AG04450 (cell line): ENCODE measurements at regions of chr12 and their contacts with region 1.

Region 1: DNA sequence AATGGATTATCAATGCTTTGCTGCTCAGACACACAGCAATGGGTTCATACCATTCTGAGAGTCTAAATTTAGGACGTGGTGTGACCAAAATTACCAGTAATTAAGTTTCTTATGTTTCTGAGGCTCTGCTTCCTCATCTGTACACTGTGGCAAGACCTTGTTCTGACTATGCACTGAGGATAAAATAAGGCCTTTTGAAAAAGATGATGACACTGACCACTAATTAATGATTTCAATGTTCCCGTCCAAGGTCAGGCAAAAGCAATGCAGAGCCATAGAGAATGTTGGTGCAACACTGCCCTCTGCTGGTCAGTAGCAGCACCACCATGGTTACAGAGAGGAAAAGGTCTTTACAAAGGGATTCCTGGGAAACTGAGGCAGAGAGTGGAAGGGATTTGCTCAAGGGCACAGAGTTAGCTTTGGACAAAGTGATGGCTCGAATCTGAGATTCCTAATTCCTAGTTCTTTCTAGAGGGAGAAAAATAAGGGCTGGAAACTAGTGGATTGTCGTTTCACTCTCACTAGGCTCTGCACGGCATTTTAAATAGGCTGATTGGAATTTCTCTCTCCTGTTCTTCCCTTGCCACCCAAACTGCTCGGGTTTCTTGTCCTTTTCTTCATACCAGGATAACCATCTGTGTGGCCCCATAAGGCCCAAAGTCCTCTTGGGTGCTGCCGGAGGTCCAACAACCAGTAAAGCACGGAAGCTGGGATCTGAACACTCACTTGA is 22.3 kb upstream of the P2RX7 start:
- DNase-seq: peak; percentile 26
- H3K4me3 ChIP-seq: no peak overlapping the region
- H3K27ac ChIP-seq: no peak overlapping the region
- H3K27me3 ChIP-seq: no peaks in the 10 kb centered on the region
- CTCF ChIP-seq: peak; percentile 94

Region 2: DNA sequence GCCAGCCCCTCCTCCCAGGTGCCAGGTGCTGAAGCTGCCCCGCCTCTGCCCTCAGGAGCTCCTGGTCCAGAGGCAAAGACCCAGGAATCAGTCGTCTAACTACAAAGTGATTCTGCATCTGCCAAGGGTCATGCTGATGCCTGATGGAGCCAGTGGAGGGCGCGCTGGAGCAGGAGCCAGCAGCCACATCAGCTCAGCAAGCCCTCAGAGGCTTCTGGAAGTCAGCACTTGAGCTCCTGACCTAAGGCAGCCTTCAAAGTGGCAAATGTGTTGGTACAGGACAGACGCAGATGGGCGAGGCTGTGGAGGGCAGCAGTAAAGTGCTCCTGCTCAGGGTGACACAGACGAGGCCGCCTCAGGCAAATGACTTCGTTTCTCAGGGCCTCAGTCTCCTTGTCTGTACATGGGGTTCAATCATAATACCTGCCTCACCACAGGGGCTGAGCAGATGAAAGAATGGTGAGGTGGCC is 105.0 kb before region 1 on chr12:
- CTCF ChIA-PET with region 1: interaction called, 10 read pairs
- POLR2A ChIA-PET with region 1: no interaction called
- DNase-seq: no peak
- H3K4me3 ChIP-seq: no peak overlapping the region
- H3K27ac ChIP-seq: no peak overlapping the region
- H3K27me3 ChIP-seq: no peaks in the 10 kb centered on the region
- CTCF ChIP-seq: peak; percentile 70

Region 3: DNA sequence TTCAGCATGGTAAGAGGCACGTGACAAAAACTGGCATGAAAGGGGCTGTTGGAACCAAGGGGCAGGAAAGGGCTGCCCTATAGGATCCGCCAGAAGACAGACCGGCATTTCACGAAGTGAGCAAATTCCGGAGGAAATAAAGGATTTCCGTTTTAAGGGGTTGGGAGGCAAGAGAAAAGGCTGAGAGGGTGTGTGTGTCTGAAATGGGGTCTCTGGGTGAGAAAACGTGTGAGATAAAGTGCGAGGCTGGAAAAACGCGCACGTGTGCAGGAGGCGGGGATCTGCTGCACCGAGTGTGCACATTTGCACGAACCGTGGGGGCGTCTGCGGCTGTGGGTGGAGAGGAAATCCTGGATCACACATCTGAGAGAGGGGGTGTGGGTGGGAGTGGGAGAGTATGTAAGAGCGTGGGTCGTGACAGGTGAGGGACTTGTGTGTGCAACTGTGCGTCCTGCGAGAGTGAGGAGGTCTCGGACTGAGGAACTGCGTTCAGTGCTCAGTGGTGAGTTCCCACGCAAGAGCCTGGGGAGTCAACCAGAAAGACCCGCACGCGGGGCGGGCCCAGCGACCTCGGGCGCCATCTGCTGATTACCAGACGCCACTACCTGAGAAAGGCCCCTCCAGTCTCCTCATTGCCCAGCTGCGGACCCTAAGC is 14.7 kb before region 1 on chr12:
- CTCF ChIA-PET with region 1: interaction called, 13 read pairs
- POLR2A ChIA-PET with region 1: no interaction called
- DNase-seq: peak; percentile 10
- H3K4me3 ChIP-seq: peak overlapping the region; percentile 49
- H3K27ac ChIP-seq: no peak overlapping the region
- H3K27me3 ChIP-seq: peaks cover 3% of the 10 kb centered on the region
- CTCF ChIP-seq: peak; percentile 83

Region 4: DNA sequence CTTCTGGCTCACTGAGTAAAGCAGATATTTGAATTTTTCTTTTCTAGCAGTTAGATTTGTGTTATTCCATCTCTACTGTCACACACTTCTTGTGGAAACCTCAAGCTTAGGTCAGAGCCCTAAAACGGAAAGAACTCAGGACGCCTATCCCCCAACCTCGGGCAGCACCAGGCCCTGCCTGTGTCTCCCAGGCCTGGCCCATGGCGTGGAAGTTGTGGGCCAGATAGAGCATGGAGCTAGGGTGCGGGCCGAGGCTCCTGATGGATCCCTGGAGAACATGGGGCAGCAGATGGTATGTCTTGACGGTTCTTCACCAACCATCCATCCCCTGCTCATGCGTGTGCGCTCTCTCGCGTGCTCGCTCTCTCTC is 120.1 kb after region 1 on chr12:
- CTCF ChIA-PET with region 1: interaction called, 15 read pairs
- POLR2A ChIA-PET with region 1: no interaction called
- DNase-seq: no peak
- H3K4me3 ChIP-seq: no peak overlapping the region
- H3K27ac ChIP-seq: no peak overlapping the region
- H3K27me3 ChIP-seq: no peaks in the 10 kb centered on the region
- CTCF ChIP-seq: no peak